CD8-positive, alpha-beta T cell (primary cell): ENCODE measurements at regions of chr17 and their contacts with region 1.

Region 1: DNA sequence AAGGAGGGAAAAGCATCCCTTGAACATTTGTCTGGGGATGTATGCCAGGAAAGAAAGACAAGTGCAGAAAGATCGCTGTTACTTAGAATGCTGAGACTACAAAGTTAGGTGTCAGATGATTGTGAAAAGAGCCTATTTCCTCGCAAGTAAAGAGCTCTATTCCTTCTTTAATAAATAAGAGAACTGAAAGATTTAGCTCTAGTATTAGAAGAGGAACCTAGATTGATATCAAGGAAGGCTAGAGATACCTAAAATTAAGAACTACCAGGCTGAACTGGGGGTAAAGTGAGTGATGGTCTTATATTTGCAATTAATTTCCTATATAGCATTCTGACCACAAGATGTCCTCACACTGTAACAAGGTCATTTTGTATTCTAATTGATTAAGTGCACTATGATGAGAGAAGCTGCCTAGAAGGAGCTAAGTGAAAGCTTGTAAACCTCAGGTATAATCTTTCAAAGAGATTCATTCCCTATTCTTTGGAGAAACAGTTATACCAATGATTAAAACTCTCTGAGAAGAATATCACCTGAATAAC is 62.3 kb downstream of the SSH2 start:
- DNase-seq: peak in 1 of 9 experiments; percentile 16
- ATAC-seq: no peak
- H3K4me3 ChIP-seq: no peak overlapping the region
- H3K4me3 Mint-ChIP-seq: no peak overlapping the region
- H3K27ac ChIP-seq: no peak overlapping the region
- H3K27ac Mint-ChIP-seq: peak overlapping the region; percentile 27
- H3K4me1 ChIP-seq: no peaks in the 10 kb centered on the region
- H3K4me1 Mint-ChIP-seq: peaks cover 29% of the 10 kb centered on the region
- H3K27me3 ChIP-seq: no peaks in the 10 kb centered on the region
- H3K27me3 Mint-ChIP-seq: no peaks in the 10 kb centered on the region
- CTCF ChIP-seq: no peak

Region 2: GRCh38 chr17:29903471-29903870 is 35.8 kb after region 1 on chr17:
- CTCF ChIA-PET with region 1: no interaction called
- POLR2A ChIA-PET with region 1: no interaction called
- intact Hi-C with region 1: loop called in 1 of 2 experiments (anchors 5 kb)
- DNase-seq: no peak
- ATAC-seq: no peak
- H3K4me3 ChIP-seq: no peak overlapping the region
- H3K4me3 Mint-ChIP-seq: no peak overlapping the region
- H3K27ac ChIP-seq: no peak overlapping the region
- H3K27ac Mint-ChIP-seq: no peak overlapping the region
- H3K4me1 ChIP-seq: peaks cover 14% of the 10 kb centered on the region
- H3K4me1 Mint-ChIP-seq: peaks cover 36% of the 10 kb centered on the region
- H3K27me3 ChIP-seq: no peaks in the 10 kb centered on the region
- H3K27me3 Mint-ChIP-seq: no peaks in the 10 kb centered on the region
- CTCF ChIP-seq: no peak

Region 3: GRCh38 chr17:29941334-29941733 is 73.6 kb after region 1 on chr17 and contains the start of gene EFCAB5:
- CTCF ChIA-PET with region 1: interaction called, 3 read pairs
- POLR2A ChIA-PET with region 1: no interaction called
- intact Hi-C with region 1: loop called in 1 of 2 experiments (anchors 5 kb)
- DNase-seq: no peak
- ATAC-seq: no peak
- H3K4me3 ChIP-seq: no peak within 1 kb of the TSS
- H3K4me3 Mint-ChIP-seq: no peak within 1 kb of the TSS
- H3K27ac ChIP-seq: no peak within 1 kb of the TSS
- H3K27ac Mint-ChIP-seq: no peak within 1 kb of the TSS
- H3K4me1 ChIP-seq: no peaks in the 10 kb centered on the region
- H3K4me1 Mint-ChIP-seq: no peaks in the 10 kb centered on the region
- H3K27me3 ChIP-seq: no peaks in the 10 kb centered on the region
- H3K27me3 Mint-ChIP-seq: peaks cover 3% of the 10 kb centered on the region
- CTCF ChIP-seq: no peak
- total RNA-seq, gene EFCAB5: 0.56 to 1.1 TPM

Region 4: GRCh38 chr17:30116661-30117551 is 249.2 kb after region 1 on chr17 and contains the start of gene NSRP1:
- CTCF ChIA-PET with region 1: no interaction called
- POLR2A ChIA-PET with region 1: no interaction called
- intact Hi-C with region 1: no loop called
- DNase-seq: peak; percentile 83 to 96 (median 92)
- ATAC-seq: peak; percentile 97
- H3K4me3 ChIP-seq: peak within 1 kb of the TSS; percentile 66 to 96
- H3K4me3 Mint-ChIP-seq: peak within 1 kb of the TSS; percentile 100
- H3K27ac ChIP-seq: peak within 1 kb of the TSS; percentile 95 to 99
- H3K27ac Mint-ChIP-seq: peak within 1 kb of the TSS; percentile 100
- H3K4me1 ChIP-seq: peaks cover 16% of the 10 kb centered on the region
- H3K4me1 Mint-ChIP-seq: peaks cover 41% of the 10 kb centered on the region
- H3K27me3 ChIP-seq: no peaks in the 10 kb centered on the region
- H3K27me3 Mint-ChIP-seq: no peaks in the 10 kb centered on the region
- CTCF ChIP-seq: no peak
- total RNA-seq, gene NSRP1: 22.4 to 23.1 TPM